ENCODE measurements at regions of chrX and their contacts with region 1.

Region 1: GRCh38 chrX:69795702-69796101 is 179.8 kb downstream of the EDA start:
- DNase-seq: no peak
- H3K4me3 ChIP-seq: no peak overlapping the region
- CTCF ChIP-seq: no peak
- POLR2A ChIP-seq: no peak

Region 2: DNA sequence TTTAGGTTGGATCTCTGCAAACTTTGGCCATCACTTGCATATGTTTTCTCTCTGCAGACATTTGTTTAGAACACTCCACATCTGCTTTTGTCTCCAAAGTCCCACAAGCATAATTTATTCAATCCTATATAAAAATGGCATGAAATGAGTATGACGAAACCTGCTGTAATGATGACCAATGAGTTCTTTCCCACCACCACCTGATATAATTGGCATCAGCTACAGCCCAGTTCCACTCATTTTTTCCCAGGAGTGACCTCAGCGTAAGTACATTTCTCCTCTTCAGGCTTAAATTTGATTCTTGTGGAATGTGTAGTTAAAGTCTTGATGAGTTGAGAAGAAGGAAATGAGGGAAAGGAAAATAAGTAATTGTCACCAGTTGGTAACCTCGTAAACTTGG is 48.9 kb after region 1 on chrX:
- intact Hi-C with region 1: loop called (anchors 1 kb)
- DNase-seq: no peak
- H3K4me3 ChIP-seq: no peak overlapping the region
- CTCF ChIP-seq: no peak
- POLR2A ChIP-seq: no peak

Measured in lower leg skin (tissue), 4 donors.